ENCODE measurements at regions of chr3 and their contacts with region 1.

Region 1: DNA sequence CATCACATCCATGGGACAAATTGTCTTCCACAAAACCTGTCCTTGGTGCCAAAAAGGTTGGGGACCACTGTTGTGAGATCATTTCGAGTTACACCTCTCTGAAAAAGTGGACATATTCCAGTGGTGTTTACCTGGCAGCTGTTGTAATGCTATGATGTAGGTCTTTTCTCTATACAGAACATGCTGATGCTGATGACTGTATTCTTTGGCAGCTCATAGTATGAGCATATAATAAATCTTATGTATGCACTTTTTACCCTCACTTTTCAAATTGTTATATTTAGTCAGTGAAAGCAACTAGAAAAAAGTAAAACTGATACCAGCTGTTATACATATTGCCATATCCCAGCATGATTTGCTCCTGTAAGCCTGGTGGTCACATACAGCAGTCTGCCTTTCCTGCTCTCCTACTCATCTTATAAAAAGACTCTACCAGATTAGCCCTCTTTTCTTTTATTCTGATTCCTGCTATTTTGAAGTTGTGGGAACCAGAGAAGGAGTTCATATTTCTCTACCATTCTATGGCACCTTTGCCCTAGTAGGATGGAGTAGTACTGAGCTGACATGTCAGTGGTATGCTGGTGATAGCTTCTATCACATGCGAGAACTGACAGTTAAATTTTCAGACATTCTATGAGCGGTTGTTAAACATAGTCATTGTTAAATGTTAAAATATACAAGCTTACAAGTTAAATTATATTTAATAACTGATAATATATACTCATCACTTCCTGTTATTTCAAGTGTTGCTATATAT is 128.7 kb downstream of the FNDC3B start:
- DNase-seq: no peak
- ATAC-seq: peak in 1 of 2 experiments; percentile 10; a peak in 1 of 6 replicates
- H3K4me3 ChIP-seq: no peak overlapping the region
- H3K27ac ChIP-seq: peak overlapping the region; percentile 87 to 92
- H3K4me1 ChIP-seq: peaks cover 94% of the 10 kb centered on the region
- CTCF ChIP-seq: no peak
- EP300 ChIP-seq: no peak
- POLR2A ChIP-seq: no peak
- RAD21 ChIP-seq: no peak

Region 2: GRCh38 chr3:171772427-171773056 is 395.5 kb before region 1 on chr3:
- CTCF ChIA-PET with region 1: no interaction called
- POLR2A ChIA-PET with region 1: no interaction called
- DNase-seq: peak; percentile 38 to 55
- ATAC-seq: peak; percentile 64 to 85; a peak in 5 of 6 replicates
- H3K4me3 ChIP-seq: no peak overlapping the region
- H3K27ac ChIP-seq: no peak overlapping the region
- H3K4me1 ChIP-seq: peaks cover 30% of the 10 kb centered on the region
- CTCF ChIP-seq: peak; percentile 74
- EP300 ChIP-seq: no peak
- POLR2A ChIP-seq: no peak
- RAD21 ChIP-seq: peak; percentile 75 to 76

Region 3: DNA sequence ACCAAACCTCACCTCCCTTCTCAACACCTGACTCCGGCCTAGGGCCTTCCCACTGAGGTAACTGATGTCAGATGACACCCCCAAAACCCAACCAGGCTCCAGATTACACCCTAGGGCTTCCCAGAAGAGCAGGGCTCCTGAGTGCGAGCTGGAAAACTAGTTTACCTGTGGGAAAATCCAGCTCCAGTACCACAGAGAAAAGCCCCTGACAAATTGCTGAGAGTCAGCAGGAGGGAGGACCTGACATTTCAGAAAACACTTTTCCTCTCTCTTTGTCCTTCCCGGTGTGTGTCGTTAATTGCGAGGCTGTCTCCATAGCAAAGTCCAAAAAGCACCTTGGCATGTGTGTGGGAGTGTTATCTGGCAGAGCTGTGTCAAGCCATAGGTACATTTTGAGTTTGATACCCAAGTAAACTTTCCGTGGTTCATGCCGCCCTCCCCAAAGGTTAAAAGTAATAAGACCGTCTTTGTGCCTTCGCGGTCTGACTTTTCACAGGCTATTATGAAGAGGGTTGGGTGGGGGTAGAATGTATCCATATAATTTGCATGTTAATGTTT is 208.5 kb before region 1 on chr3:
- CTCF ChIA-PET with region 1: no interaction called
- POLR2A ChIA-PET with region 1: no interaction called
- DNase-seq: no peak
- ATAC-seq: no peak
- H3K4me3 ChIP-seq: no peak overlapping the region
- H3K27ac ChIP-seq: peak overlapping the region in 1 of 2 experiments; percentile 58; a peak in 2 of 6 replicates
- H3K4me1 ChIP-seq: peaks cover 20% of the 10 kb centered on the region
- CTCF ChIP-seq: no peak
- EP300 ChIP-seq: no peak
- POLR2A ChIP-seq: no peak
- RAD21 ChIP-seq: no peak

Region 4: GRCh38 chr3:172148241-172148640 is 19.8 kb before region 1 on chr3:
- CTCF ChIA-PET with region 1: interaction called, 10 read pairs
- POLR2A ChIA-PET with region 1: interaction called, 4 read pairs
- DNase-seq: no peak
- ATAC-seq: no peak
- H3K4me3 ChIP-seq: no peak overlapping the region
- H3K27ac ChIP-seq: peak overlapping the region; percentile 46 to 77; a peak in 5 of 6 replicates
- H3K4me1 ChIP-seq: peaks cover 77% of the 10 kb centered on the region
- CTCF ChIP-seq: no peak
- EP300 ChIP-seq: no peak
- POLR2A ChIP-seq: no peak
- RAD21 ChIP-seq: no peak

Region 5: DNA sequence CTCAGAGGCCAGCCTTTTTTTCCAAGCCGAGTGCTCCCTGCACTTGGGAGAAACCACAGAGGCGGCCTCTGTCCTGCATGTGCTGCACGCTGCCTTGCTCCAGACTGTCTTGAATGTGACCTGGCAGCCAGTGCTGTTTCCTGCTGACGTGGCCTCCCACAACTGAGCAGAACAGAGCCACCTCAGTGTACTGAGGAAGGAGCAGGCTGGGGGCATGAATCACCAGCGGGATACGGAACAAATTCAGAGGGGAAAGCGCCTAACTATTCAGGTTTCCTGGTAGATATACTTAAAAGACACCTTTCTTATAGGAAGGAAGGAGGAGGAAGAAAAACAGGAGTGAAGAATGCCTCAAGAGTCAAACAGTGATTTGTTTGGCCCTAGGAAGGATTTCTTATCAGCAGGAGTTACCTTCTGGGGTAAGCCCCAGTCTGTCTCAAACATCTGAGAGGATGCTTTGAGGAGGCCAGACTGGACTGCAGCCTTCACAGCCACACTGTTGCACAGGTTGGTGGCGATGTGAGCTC is 14.7 kb before region 1 on chr3:
- CTCF ChIA-PET with region 1: interaction called, 10 read pairs
- POLR2A ChIA-PET with region 1: interaction called, 3 read pairs
- DNase-seq: peak; percentile 26 to 83
- ATAC-seq: peak; percentile 94 to 95
- H3K4me3 ChIP-seq: no peak overlapping the region
- H3K27ac ChIP-seq: peak overlapping the region; percentile 91
- H3K4me1 ChIP-seq: peaks cover 94% of the 10 kb centered on the region
- CTCF ChIP-seq: no peak
- EP300 ChIP-seq: no peak
- POLR2A ChIP-seq: no peak
- RAD21 ChIP-seq: no peak

Region 6: GRCh38 chr3:172185907-172186306 is 17.8 kb after region 1 on chr3:
- CTCF ChIA-PET with region 1: interaction called, 10 read pairs
- POLR2A ChIA-PET with region 1: interaction called, 4 read pairs
- DNase-seq: no peak
- ATAC-seq: no peak
- H3K4me3 ChIP-seq: no peak overlapping the region
- H3K27ac ChIP-seq: 0 out of 6 replicates have a peak overlapping the region, but pooled peaks of 1 of the 2 experiments have one; percentile 19
- H3K4me1 ChIP-seq: peaks cover 62% of the 10 kb centered on the region
- CTCF ChIP-seq: no peak
- EP300 ChIP-seq: no peak
- POLR2A ChIP-seq: no peak
- RAD21 ChIP-seq: no peak